IMR-90 (cell line): ENCODE measurements at regions of chr14 and their contacts with region 1.

Region 1: DNA sequence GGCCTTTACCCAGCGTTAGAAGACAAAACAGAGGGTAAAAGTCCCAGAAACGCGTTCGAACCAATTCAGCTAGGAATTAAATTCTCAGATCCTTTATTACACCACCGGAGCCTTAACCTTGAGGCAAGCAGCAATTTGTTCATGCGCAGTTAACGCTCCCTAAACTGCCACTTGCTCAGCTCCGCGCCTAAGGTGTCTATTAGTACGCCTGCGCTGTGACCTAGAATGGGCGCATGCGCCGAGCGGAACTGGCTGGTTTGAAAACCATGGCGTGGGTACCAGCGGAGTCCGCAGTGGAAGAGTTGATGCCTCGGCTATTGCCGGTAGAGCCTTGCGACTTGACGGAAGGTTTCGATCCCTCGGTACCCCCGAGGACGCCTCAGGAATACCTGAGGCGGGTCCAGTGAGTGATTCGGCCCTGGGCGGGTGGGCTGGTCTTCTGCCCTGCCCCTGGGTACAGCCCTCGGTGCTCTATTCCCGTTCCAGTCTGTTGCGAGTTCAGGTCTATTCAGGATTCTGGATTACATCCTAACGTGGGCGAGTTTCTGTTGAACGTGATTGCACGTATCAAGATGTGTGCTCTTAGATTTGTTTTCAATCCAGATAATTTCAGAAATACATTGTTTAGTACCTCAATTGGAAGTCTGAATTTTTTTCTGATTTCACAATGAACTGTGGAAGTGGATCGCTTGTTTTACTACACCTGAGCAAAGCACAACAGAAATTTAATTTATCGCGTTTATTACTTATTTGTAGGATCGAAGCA is at the start of gene GEMIN2:
- DNase-seq: peak; percentile 91
- ATAC-seq: peak; percentile 99
- H3K4me3 ChIP-seq: peak within 1 kb of the TSS; percentile 83
- H3K27ac ChIP-seq: peak within 1 kb of the TSS; percentile 47
- H3K4me1 ChIP-seq: 0 out of 2 replicates have a peak, but pooled peaks cover 1% of the 10 kb centered on the region
- H3K27me3 ChIP-seq: no peaks in the 10 kb centered on the region
- CTCF ChIP-seq: no peak
- POLR2A ChIP-seq: no peak; the same call in 1 of the 2 replicates
- RAD21 ChIP-seq: no peak
- total RNA-seq, gene GEMIN2: 10.6 and 12.8 TPM in 2 replicates

Region 2: GRCh38 chr14:39085933-39086332 is 28.3 kb before region 1 on chr14:
- CTCF ChIA-PET with region 1: no interaction called
- POLR2A ChIA-PET with region 1: no interaction called
- dilution Hi-C with region 1: no loop called
- in situ Hi-C with region 1: no loop called
- intact Hi-C with region 1: no loop called
- DNase-seq: peak; percentile 31
- ATAC-seq: peak; percentile 70
- H3K4me3 ChIP-seq: no peak overlapping the region
- H3K27ac ChIP-seq: no peak overlapping the region
- H3K4me1 ChIP-seq: no peaks in the 10 kb centered on the region
- H3K27me3 ChIP-seq: no peaks in the 10 kb centered on the region
- CTCF ChIP-seq: no peak
- POLR2A ChIP-seq: no peak
- RAD21 ChIP-seq: no peak

Region 3: GRCh38 chr14:39368261-39368959 is 254.2 kb after region 1 on chr14:
- CTCF ChIA-PET with region 1: no interaction called
- POLR2A ChIA-PET with region 1: no interaction called
- dilution Hi-C with region 1: no loop called
- in situ Hi-C with region 1: loop called (anchors 5 kb)
- intact Hi-C with region 1: loop called (anchors 2 kb)
- DNase-seq: peak; percentile 78
- ATAC-seq: peak; percentile 89
- H3K4me3 ChIP-seq: no peak overlapping the region
- H3K27ac ChIP-seq: no peak overlapping the region
- H3K4me1 ChIP-seq: no peaks in the 10 kb centered on the region
- H3K27me3 ChIP-seq: no peaks in the 10 kb centered on the region
- CTCF ChIP-seq: peak; percentile 81
- POLR2A ChIP-seq: no peak
- RAD21 ChIP-seq: peak; percentile 82

Region 4: DNA sequence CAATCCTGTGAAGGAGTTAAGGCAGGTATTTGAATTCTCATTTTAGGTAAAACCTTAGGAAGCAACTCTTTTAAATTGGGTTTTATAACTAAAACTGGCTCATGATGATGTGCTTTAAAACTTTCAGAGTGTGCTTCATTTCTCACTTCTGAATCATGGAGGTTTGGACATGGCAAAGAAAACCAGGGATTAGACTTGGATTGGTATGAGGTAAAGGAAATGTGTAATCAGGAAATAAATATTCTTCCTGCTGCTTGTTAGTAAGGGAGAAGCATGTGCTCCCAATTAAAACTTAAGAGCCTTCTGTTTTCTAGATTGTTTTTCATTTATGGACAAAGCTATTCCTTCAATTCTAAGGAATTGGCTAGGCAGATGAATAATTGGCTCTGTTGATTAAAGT is 260.6 kb after region 1 on chr14:
- CTCF ChIA-PET with region 1: no interaction called
- POLR2A ChIA-PET with region 1: no interaction called
- dilution Hi-C with region 1: no loop called
- in situ Hi-C with region 1: loop called (anchors 5 kb)
- intact Hi-C with region 1: no loop called
- DNase-seq: peak; percentile 74
- ATAC-seq: peak; percentile 68
- H3K4me3 ChIP-seq: no peak overlapping the region
- H3K27ac ChIP-seq: no peak overlapping the region
- H3K4me1 ChIP-seq: peaks cover 7% of the 10 kb centered on the region; the same call in 1 of the 2 replicates
- H3K27me3 ChIP-seq: no peaks in the 10 kb centered on the region
- CTCF ChIP-seq: no peak
- POLR2A ChIP-seq: no peak
- RAD21 ChIP-seq: no peak